PC-9 (cell line): ENCODE measurements at regions of chr12 and their contacts with region 1.

Region 1: GRCh38 chr12:26246483-26247111 is 51.2 kb downstream of the SSPN start:
- DNase-seq: peak; percentile 95 to 99
- H3K4me3 ChIP-seq: peak overlapping the region; percentile 10; the same call in 1 of the 2 replicates
- H3K27ac ChIP-seq: peak overlapping the region; percentile 96
- H3K4me1 ChIP-seq: peaks cover 71% of the 10 kb centered on the region
- H3K27me3 ChIP-seq: no peaks in the 10 kb centered on the region
- CTCF ChIP-seq: no peak

Region 2: GRCh38 chr12:25950329-25951115 is 296.1 kb before region 1 on chr12:
- CTCF ChIA-PET with region 1: no interaction called
- POLR2A ChIA-PET with region 1: no interaction called
- intact Hi-C with region 1: no loop called
- DNase-seq: peak in 1 of 2 experiments; percentile 36
- H3K4me3 ChIP-seq: no peak overlapping the region
- H3K27ac ChIP-seq: no peak overlapping the region
- H3K4me1 ChIP-seq: no peaks in the 10 kb centered on the region
- H3K27me3 ChIP-seq: no peaks in the 10 kb centered on the region
- CTCF ChIP-seq: no peak

Region 3: DNA sequence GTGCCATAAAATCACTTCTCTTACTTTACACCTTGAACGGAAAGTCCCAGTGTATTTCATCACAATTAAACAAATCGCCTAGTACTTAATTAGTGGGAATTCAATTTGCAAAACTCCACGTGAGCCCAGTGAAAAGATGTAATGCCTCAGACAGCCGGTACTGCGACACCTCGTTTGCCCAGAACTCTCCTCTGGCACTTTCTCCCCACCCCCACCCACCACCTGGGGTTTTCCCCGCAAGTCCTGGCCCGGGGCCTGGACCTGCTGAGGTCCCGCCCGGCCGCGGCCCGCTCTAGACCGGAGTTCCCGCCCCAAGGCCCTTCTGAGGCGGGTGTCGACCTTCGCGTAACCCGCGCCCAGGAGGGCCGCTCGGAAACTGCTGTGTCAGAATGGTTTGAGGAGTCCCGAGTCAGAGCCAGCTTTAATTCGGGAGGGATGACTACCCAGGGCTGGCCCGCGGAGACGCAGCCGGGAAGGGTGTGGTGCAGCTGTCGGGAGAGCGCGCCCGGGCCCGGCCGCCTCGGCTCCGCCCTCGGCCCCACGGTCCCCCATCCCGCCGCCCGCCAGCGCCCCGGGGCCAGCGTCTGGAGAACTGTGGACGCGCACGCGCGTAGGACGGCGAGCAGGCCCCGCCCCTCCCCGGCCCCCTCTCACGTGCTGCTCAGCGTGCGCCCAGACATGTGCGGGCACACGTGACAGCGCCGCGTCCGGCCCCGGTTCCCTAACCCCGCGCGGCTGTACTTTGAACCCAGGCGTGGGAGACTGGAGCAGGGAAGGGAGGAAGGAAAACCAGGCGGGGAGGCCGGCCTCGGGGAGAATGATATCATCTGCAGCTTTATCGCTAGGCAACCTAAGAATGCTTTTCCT is 132.5 kb before region 1 on chr12:
- CTCF ChIA-PET with region 1: interaction called, 4 read pairs
- POLR2A ChIA-PET with region 1: interaction called, 12 read pairs
- intact Hi-C with region 1: no loop called
- DNase-seq: peak; percentile 91 to 92
- H3K4me3 ChIP-seq: peak overlapping the region; percentile 57
- H3K27ac ChIP-seq: peak overlapping the region; percentile 93
- H3K4me1 ChIP-seq: peaks cover 61% of the 10 kb centered on the region
- H3K27me3 ChIP-seq: no peaks in the 10 kb centered on the region
- CTCF ChIP-seq: peak; percentile 46

Region 4: DNA sequence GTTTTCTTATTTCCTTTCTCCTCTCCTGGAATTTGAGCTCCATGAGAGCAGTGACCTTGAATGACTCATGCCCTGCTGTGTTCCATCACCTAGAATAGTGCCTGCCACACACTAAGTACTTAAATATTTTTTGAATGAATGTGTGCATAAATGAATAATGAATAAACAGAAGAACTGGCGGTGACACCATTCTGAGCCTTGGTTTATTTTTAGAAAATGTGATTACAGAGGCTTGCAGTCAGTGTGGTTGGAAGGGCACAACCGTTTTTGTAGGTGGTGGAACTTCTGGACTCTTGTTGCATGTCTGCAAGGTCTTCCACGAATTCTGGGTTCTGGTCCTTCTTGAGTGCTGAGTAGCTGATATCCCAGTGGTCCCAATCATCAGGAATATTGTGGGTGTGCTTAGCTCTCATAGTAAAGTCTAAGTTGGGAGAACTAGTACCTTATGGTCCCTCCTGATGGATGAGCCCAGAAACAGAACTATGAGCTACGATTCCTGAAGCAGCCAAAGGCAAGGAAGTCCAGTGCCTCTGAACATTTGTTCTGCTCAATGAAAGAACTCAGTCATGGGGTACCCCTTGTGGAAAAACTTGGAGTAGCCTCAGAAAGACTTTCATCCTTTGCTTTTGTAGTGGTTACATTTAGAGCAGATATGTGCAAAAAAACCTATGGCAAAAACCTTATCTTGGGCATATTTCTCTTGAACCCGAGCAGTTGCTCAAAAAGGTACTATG is 93.0 kb before region 1 on chr12:
- CTCF ChIA-PET with region 1: interaction called, 3 read pairs
- POLR2A ChIA-PET with region 1: interaction called, 7 read pairs
- intact Hi-C with region 1: loop called (anchors 2 kb)
- DNase-seq: peak; percentile 61 to 97
- H3K4me3 ChIP-seq: peak overlapping the region; percentile 17; the same call in 1 of the 2 replicates
- H3K27ac ChIP-seq: peak overlapping the region; percentile 75
- H3K4me1 ChIP-seq: peaks cover 49% of the 10 kb centered on the region
- H3K27me3 ChIP-seq: no peaks in the 10 kb centered on the region
- CTCF ChIP-seq: peak; percentile 43; the same call in 1 of the 2 replicates

Region 5: GRCh38 chr12:26195641-26196420 is 50.8 kb before region 1 on chr12:
- CTCF ChIA-PET with region 1: no interaction called
- POLR2A ChIA-PET with region 1: no interaction called
- intact Hi-C with region 1: loop called (anchors 5 kb)
- DNase-seq: peak in 1 of 2 experiments; percentile 46
- H3K4me3 ChIP-seq: peak overlapping the region; percentile 79
- H3K27ac ChIP-seq: peak overlapping the region; percentile 38
- H3K4me1 ChIP-seq: peaks cover 34% of the 10 kb centered on the region
- H3K27me3 ChIP-seq: no peaks in the 10 kb centered on the region
- CTCF ChIP-seq: no peak

Region 6: DNA sequence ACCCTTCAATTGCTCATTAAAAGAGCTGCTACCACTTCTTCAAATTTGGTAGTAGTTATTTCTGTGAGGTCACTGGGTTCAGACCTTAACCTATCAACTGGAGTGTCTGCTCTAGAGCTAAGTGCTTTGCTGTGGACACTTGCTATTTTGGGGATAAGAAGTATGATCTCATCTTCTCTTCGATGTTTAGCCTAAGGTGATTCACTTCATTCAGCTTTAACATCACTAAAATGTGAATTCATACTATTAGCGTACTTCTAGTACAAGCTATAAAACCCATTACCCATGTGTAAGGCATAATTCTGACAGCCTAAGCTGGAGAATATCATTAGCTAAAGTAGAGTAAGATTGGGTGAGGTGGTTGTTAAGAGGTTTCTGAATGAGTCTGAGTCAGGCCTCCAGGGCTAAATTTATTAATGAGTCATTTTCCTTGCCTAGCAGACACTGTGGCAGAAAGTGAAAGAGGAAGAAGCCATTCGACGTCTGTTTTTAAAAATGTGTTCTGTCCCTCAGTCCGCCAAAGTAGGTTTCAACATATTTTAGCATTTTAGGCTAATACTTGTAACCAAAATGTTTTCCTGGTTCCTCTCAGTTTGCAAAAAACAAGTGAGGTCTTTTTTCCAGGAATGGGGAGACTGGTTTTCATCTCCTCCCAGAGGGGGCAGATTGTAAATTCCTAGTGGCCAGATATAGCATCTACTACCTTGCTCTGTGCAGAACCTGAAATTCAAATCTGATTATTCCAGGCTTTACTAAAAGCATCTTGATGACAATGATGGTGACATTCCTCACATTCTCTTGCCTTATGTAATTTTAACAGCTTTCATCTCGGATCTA is 52.4 kb after region 1 on chr12:
- CTCF ChIA-PET with region 1: no interaction called
- POLR2A ChIA-PET with region 1: no interaction called
- intact Hi-C with region 1: loop called (anchors 2 kb)
- DNase-seq: peak; percentile 49 to 84
- H3K4me3 ChIP-seq: peak overlapping the region; percentile 56
- H3K27ac ChIP-seq: peak overlapping the region; percentile 85
- H3K4me1 ChIP-seq: peaks cover 19% of the 10 kb centered on the region
- H3K27me3 ChIP-seq: no peaks in the 10 kb centered on the region
- CTCF ChIP-seq: peak; percentile 62

Region 7: DNA sequence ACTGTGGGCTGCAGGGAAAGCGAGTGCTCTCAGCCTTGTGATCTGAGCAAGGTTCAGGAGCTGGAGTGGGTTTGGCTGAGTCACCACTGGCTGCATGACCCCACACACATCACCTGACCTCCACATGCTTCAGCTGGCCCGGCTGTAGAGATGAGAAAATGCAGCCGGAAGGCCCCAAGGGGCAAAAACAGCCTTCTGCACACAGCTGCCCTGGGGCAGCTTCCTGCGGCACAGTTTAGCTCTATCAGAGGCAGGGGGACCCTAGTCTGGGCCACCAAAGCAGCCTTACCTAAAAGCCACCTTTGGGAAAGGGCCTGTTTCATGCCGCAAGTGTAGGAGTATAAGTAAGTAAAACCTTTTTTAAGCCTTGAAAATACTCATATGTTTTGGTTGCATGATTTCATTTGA is 72.1 kb after region 1 on chr12:
- CTCF ChIA-PET with region 1: no interaction called
- POLR2A ChIA-PET with region 1: interaction called, 3 read pairs
- intact Hi-C with region 1: loop called (anchors 5 kb)
- DNase-seq: peak in 1 of 2 experiments; percentile 59
- H3K4me3 ChIP-seq: no peak overlapping the region
- H3K27ac ChIP-seq: peak overlapping the region; percentile 16
- H3K4me1 ChIP-seq: peaks cover 21% of the 10 kb centered on the region
- H3K27me3 ChIP-seq: no peaks in the 10 kb centered on the region
- CTCF ChIP-seq: no peak